Mucosa of descending colon (tissue), 3 donors: ENCODE measurements at regions of chr5 and their contacts with region 1.

Region 1: DNA sequence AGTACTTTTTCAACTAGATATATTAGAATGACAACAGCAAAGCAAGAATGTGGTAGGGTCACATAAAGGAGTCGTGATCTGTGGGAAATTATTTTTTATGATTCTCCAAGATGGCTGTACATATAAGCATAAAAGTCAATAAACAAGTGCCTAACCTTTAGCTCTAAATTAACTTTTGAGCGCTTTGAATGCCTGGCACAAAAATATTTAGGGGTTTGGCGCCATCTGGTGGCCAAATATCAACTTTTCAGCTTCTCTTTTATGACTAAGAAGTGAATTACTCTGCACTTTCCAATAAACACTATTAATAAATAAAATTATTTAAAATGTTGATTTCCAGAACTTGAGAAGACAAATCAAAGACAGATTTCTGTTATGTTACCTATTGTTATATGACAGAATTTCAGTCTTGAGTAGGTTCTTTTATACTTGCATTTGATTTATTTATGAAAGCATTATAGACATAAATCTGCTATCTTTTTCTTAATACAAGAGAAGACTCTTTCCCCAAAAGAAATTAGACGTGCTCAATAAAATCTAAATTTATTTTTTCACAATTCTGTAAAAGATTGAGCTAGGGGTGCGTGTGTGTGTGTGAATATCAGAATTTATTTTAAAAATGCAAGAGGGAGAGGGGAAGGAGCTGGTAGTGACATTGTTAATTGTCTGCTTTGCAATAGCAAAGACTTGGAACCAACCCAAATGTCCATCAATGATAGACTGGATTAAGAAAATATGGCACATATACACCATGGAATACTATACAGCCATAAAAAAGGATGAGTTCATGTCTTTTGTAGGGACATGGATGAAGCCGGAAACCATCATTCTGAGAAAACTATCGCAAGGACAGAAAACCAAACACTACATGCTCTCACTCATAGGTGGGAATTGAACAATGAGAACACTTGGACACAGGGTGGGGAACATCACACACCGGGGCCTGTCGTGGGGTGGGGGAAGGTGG is 36.7 kb upstream of the ARRDC3 start:
- DNase-seq: peak in 2 of 3 donors; percentile 31 to 79
- ATAC-seq: peak; percentile 59
- H3K4me3 ChIP-seq: no peak overlapping the region
- H3K4me1 ChIP-seq: no peaks in the 10 kb centered on the region
- CTCF ChIP-seq: no peak

Region 2: GRCh38 chr5:90854169-90854568 is 565.7 kb before region 1 on chr5:
- intact Hi-C with region 1: loop called in 1 of 2 experiments (anchors 10 kb)
- DNase-seq: no peak
- ATAC-seq: no peak
- H3K4me3 ChIP-seq: no peak overlapping the region
- H3K4me1 ChIP-seq: no peaks in the 10 kb centered on the region
- CTCF ChIP-seq: no peak

Region 3: DNA sequence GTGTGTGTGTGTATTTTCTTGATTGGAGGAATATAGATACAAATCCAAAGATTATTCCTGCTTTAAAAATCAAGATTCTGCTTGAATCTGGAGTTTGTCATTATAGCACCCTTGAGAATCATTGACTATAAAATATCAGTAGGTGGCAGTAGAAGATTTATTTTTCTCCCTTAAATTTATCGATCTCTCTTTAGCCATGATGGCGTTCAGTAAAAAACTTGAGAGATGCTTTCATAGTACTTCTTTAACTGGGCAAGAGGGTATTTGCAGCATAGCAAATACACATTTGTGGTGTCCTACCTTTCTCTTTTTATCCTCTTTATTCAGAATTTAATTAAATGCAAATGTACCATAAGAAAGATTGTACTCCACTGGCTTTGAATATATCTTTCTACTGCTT is 553.5 kb before region 1 on chr5:
- intact Hi-C with region 1: loop called (anchors 10 kb)
- DNase-seq: no peak
- ATAC-seq: peak; percentile 55
- H3K4me3 ChIP-seq: no peak overlapping the region
- H3K4me1 ChIP-seq: no peaks in the 10 kb centered on the region
- CTCF ChIP-seq: no peak

Region 4: DNA sequence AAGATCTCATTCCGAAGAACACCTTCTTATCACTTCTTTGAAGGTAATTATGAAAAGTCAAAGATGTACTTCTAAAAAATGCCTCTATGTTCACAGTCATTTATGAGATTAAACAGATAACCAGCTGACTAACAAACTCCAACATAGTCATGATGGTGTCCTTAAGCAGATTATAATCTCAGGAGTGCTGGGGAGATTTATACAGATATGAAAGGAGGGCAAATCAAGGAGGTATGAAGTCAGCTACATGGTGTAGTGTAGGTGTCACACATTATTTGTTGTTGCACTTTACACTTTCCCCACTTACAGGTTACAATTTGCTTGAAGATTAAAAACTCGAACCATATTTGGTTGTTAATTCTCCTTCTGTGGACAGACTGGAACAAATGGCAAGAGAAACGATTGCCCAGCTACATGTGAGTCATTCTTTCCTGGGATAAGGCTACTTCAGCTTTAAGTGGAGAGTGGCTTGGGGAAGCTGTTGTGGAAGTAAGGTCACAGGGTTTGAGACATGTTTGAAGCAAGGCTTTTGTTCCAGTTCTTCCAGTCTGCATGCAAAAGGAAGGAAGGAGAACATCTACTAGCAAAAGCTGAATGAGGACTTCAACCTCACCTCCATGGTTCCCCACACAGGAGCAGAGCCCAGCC is 541.2 kb before region 1 on chr5:
- intact Hi-C with region 1: loop called in 1 of 2 experiments (anchors 10 kb)
- DNase-seq: peak in 1 of 3 donors; percentile 28
- ATAC-seq: peak; percentile 75
- H3K4me3 ChIP-seq: no peak overlapping the region
- H3K4me1 ChIP-seq: no peaks in the 10 kb centered on the region
- CTCF ChIP-seq: no peak

Region 5: DNA sequence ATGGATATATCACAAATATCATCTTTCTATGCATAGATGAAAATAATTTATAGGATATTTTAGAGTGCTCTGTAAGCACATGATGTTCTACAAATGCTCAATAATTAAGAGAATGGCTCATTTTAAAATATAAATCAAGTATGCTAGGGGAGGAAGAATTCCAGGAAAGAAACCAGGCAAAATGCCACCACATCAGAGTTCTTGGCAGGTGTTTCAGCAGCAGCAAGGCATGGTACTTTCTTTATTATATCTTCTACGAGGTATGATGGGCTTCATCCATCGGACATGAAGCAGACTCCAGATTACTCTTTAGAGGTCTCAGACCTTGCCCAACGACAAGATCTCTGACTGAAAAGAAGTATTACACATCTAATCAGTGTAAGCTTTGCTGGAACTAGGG is 279.6 kb after region 1 on chr5:
- intact Hi-C with region 1: no loop called
- DNase-seq: no peak
- ATAC-seq: no peak
- H3K4me3 ChIP-seq: no peak overlapping the region
- H3K4me1 ChIP-seq: no peaks in the 10 kb centered on the region
- CTCF ChIP-seq: no peak